Gastrocnemius medialis (tissue), 4 donors: ENCODE measurements at regions of chr10 and their contacts with region 1.

Region 1: GRCh38 chr10:79068562-79069324 is at the start of gene ZMIZ1:
- DNase-seq: peak; percentile 89 to 91
- ATAC-seq: peak; percentile 62 to 67
- H3K4me3 ChIP-seq: peak within 1 kb of the TSS; percentile 71 to 98 (median 84)
- H3K27ac ChIP-seq: peak within 1 kb of the TSS; percentile 93 to 100 (median 98)
- H3K4me1 ChIP-seq: peaks cover 25 to 29% of the 10 kb centered on the region in 2 donors
- H3K27me3 ChIP-seq: no peaks in the 10 kb centered on the region
- CTCF ChIP-seq: peak in 3 of 5 experiments; percentile 20 to 49 (median 38)
- POLR2A ChIP-seq: peak; percentile 97
- total RNA-seq, gene ZMIZ1: 22.7 to 37.5 (median 31.7) TPM

Region 2: GRCh38 chr10:78029269-78030226 is 1039.2 kb before region 1 on chr10 and contains the start of gene POLR3A:
- in situ Hi-C with region 1: no loop called
- intact Hi-C with region 1: loop called (anchors 10 kb)
- DNase-seq: peak; percentile 94 to 97
- ATAC-seq: peak; percentile 73 to 75
- H3K4me3 ChIP-seq: peak within 1 kb of the TSS; percentile 95 to 99 (median 97)
- H3K27ac ChIP-seq: peak within 1 kb of the TSS; percentile 79 to 87 (median 84)
- H3K4me1 ChIP-seq: peaks cover 23 to 28% of the 10 kb centered on the region in 2 donors
- H3K27me3 ChIP-seq: no peaks in the 10 kb centered on the region
- CTCF ChIP-seq: peak; percentile 69 to 86 (median 73)
- POLR2A ChIP-seq: peak; percentile 46 to 62
- total RNA-seq, gene POLR3A: 11.0 to 17.4 (median 15.5) TPM

Region 3: GRCh38 chr10:78756604-78757349 is 312.0 kb before region 1 on chr10:
- in situ Hi-C with region 1: no loop called
- intact Hi-C with region 1: loop called (anchors 5 kb)
- DNase-seq: peak; percentile 89 to 90
- ATAC-seq: peak; percentile 99
- H3K4me3 ChIP-seq: no peak overlapping the region
- H3K27ac ChIP-seq: peak overlapping the region; percentile 53 to 56 (median 54)
- H3K4me1 ChIP-seq: peaks cover 12 to 18% of the 10 kb centered on the region in 2 donors
- H3K27me3 ChIP-seq: no peaks in the 10 kb centered on the region
- CTCF ChIP-seq: no peak
- POLR2A ChIP-seq: peak in 1 of 2 donors; percentile 11

Region 4: DNA sequence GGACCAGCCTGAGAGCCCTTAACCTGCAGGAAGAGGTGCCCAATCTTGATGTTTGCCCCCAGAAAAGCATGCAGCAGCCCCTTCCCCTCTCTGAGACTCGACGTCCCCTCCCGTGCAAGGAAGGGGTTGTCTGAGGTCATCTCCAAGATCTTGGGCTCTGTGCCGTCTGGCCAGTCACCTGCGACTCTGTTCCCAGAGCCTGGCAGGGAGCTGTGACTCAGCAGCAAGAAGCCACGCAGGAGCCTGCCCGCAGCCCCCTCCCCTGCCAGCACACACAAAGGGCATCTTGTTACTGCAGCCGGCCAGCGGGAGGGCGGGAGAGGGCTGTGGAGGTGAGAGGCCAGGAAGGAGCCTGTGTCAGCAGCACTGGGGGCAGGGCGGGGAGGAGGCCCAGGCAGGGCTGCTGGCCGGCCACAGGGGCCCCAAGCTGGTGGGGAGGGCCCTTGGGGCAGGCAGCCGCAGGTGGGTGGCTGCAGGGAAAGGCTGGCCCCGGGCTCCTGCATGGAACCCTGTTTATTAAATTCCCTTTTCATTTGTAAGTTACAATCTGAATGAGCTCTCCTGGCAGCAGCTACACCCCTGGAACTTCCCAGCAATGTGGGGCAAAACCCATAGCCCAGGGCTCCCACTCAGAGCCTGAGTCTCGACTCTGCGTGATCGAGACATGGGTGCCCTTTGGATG is 103.7 kb before region 1 on chr10:
- in situ Hi-C with region 1: no loop called
- intact Hi-C with region 1: loop called (anchors 2 kb)
- DNase-seq: peak; percentile 92 to 97
- ATAC-seq: peak; percentile 84 to 87
- H3K4me3 ChIP-seq: no peak overlapping the region
- H3K27ac ChIP-seq: peak overlapping the region; percentile 70 to 84 (median 76)
- H3K4me1 ChIP-seq: peaks cover 13 to 29% of the 10 kb centered on the region in 2 donors
- H3K27me3 ChIP-seq: no peaks in the 10 kb centered on the region
- CTCF ChIP-seq: no peak
- POLR2A ChIP-seq: peak in 1 of 2 donors; percentile 27

Region 5: GRCh38 chr10:78972947-78973900 is 95.5 kb before region 1 on chr10:
- in situ Hi-C with region 1: no loop called
- intact Hi-C with region 1: loop called (anchors 1 kb)
- DNase-seq: peak; percentile 84 to 91
- ATAC-seq: peak; percentile 77 to 80
- H3K4me3 ChIP-seq: peak overlapping the region; percentile 40 to 72 (median 58)
- H3K27ac ChIP-seq: peak overlapping the region; percentile 97 to 100 (median 98)
- H3K4me1 ChIP-seq: peaks cover 28 to 30% of the 10 kb centered on the region in 2 donors
- H3K27me3 ChIP-seq: no peaks in the 10 kb centered on the region
- CTCF ChIP-seq: no peak
- POLR2A ChIP-seq: peak; percentile 76 to 83

Region 6: DNA sequence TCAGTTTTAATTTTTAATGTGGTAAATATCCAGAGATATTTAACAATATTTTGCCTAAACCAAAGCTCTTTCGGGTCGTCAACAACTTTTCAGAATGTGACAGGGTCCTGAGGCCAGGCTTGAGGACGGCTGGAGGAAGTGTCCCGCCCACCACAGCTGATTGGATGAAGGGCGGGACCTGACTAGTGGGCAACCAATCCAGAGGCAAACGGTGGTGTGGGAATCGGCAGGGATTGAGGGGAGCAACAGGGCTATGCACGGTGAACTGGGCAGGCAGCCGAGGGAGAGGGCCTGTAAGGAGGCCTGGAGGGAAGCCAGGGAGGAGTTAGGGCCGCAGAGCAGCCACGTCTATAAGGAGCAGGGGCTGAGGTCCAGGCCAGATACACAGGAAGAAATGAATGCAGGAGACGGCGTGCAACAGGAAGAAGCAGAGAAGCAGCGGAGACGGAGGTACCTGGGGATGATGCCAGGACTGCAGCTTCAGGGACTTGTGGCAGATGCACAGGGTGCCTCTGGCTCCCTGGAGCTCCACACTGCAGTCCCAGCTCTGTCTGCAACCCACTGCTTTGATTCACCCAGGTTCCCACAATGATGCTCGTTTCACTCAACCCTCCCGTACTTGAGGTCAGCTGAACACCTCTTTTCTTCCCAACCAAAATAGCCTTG is 46.0 kb before region 1 on chr10:
- in situ Hi-C with region 1: no loop called
- intact Hi-C with region 1: loop called (anchors 1 kb)
- DNase-seq: peak; percentile 55 to 78
- ATAC-seq: peak; percentile 57 to 70
- H3K4me3 ChIP-seq: peak overlapping the region; percentile 29 to 48 (median 36)
- H3K27ac ChIP-seq: peak overlapping the region; percentile 89 to 91 (median 90)
- H3K4me1 ChIP-seq: peaks cover 24 to 35% of the 10 kb centered on the region in 2 donors
- H3K27me3 ChIP-seq: no peaks in the 10 kb centered on the region
- CTCF ChIP-seq: no peak
- POLR2A ChIP-seq: peak in 1 of 2 donors; percentile 17

Region 7: DNA sequence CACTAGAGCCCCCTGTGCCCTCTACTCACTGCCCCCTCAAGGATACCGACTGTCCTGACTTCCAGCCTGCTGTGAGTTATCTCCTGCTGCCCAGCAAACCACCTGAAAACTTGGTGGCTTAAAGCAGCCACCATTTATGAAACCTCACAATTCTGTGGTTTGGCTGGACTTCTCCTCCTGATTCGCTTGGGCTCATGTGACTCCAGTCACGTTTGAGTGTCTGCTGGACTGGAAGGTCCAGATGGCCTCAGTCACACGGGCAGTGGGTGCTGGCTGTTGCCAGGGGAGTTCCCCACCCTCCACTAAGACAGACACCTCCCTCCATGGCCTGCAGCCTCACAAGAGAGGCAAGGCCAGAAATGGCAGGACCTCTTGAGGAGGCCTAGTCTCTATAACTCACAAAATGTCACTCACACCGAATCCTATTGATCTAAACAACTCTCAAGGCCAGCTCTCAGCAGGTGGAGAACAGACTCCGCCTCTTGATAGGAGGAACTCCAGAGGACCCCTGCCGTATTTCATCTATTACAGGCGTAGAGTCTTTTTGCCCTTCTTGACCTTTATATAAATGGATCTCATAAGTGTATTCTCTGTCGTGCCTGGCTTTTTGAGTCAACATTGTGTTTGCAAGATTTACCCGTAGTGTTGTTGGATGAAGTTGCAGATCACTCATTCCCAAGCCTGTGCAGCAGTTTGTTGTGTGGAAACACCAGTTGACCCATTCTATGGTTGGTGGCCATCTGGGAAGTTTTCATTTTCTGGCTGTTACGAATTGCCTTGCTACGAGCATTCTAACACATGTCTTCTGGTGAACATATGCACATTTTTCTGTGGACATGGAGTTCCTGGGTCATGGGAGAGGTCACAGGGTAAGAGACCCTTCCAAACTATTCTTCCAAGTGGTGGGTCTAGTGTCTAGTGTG is 48.3 kb after region 1 on chr10:
- in situ Hi-C with region 1: no loop called
- intact Hi-C with region 1: loop called (anchors 1 kb)
- DNase-seq: peak; percentile 60 to 62
- ATAC-seq: peak in 1 of 2 donors; percentile 10
- H3K4me3 ChIP-seq: no peak overlapping the region
- H3K27ac ChIP-seq: peak overlapping the region; percentile 10 to 38 (median 30)
- H3K4me1 ChIP-seq: peaks cover 59 to 65% of the 10 kb centered on the region in 2 donors
- H3K27me3 ChIP-seq: no peaks in the 10 kb centered on the region
- CTCF ChIP-seq: no peak
- POLR2A ChIP-seq: no peak

Region 8: DNA sequence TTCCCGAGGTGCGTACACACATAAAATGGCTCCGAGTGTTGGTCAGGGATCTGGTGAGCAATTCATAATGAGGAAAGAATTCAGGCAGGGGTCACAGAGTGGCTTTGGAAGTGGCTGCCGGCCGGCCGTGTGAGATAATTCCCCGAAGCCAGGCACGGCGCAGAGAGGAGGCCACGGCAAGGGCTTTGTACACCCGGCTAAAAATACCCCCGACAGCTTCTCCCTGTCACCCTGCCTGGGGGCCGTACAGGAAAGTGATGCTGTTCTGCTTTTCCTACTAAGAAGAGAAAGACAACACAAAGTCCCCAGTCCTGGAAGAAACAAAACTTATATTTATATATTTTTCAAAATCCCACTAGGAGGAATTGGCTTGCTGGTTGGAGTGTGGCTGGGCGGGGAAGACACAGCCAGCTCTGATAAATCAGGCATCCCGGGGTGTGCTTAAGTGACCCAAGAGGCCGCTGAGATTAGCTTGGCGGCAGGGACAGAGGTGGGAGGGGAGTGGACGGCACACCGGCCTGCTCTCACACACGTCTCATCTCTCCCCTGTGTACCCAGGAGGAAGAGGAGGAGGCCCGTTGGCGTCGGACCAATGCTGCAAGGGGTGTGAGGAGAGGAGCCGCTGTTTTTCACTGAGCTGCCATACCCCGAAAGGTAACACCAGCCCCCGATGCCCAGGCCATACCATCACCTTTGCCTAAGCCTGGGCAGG is 70.5 kb after region 1 on chr10:
- in situ Hi-C with region 1: no loop called
- intact Hi-C with region 1: no loop called
- DNase-seq: peak; percentile 47 to 67
- ATAC-seq: peak; percentile 59 to 76
- H3K4me3 ChIP-seq: no peak overlapping the region
- H3K27ac ChIP-seq: peak overlapping the region; percentile 78 to 92 (median 84)
- H3K4me1 ChIP-seq: peaks cover 64 to 83% of the 10 kb centered on the region in 2 donors
- H3K27me3 ChIP-seq: no peaks in the 10 kb centered on the region
- CTCF ChIP-seq: no peak
- POLR2A ChIP-seq: no peak